Activated CD4-positive, alpha-beta memory T cell treated with anti-CD3 and anti-CD28 coated beads for 36 hours (primary cell): ENCODE measurements at regions of chr7 and their contacts with region 1.

Region 1: GRCh38 chr7:130277763-130278643 is 11.3 kb downstream of the CPA2 start:
- DNase-seq: no peak
- H3K4me3 Mint-ChIP-seq: no peak overlapping the region
- H3K27ac Mint-ChIP-seq: peak overlapping the region; percentile 83
- H3K4me1 Mint-ChIP-seq: peaks cover 31% of the 10 kb centered on the region
- H3K27me3 Mint-ChIP-seq: peaks cover 11% of the 10 kb centered on the region

Region 2: DNA sequence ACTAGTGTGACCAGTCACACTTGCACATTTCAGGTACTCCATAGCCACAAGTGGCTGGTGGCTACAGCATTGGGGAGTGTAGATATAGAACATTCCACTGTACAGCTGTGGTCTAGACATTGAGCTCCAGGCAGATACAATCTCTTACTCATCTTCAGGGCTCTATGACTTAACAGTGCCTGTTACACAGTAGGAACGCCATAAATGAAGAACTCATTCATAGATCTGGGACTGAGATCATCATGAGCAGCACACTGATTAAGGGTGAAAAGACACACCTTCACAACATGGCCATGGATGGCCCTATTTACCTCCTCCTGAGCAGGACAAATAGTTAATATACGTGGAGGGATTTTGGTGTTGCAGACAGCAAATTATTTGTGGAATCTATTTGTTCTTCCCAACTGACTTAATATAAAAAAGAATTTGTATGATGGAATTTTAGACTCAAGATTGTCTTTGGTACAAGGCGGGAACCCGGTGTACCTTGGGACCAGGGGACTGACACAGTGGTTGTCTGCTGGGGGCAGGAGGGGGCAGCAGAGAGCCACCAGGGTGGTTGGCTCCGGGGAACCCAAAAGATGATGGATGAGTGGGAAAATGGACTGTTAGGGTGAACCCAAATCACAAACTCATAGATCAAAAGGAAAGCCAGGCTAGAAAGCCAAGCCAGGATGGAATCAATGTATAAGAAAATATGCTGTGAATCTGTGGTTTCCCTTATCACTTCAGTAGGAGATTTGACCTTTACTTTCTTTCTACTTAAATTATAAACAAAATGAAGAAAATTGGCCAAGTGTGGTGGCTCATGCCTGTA is 35.6 kb before region 1 on chr7:
- CTCF ChIA-PET with region 1: interaction called, 4 read pairs
- POLR2A ChIA-PET with region 1: no interaction called
- intact Hi-C with region 1: loop called (anchors 2 kb)
- DNase-seq: peak; percentile 73
- H3K4me3 Mint-ChIP-seq: no peak overlapping the region
- H3K27ac Mint-ChIP-seq: no peak overlapping the region
- H3K4me1 Mint-ChIP-seq: peaks cover 12% of the 10 kb centered on the region
- H3K27me3 Mint-ChIP-seq: peaks cover 4% of the 10 kb centered on the region

Region 3: GRCh38 chr7:130363026-130363798 is 85.2 kb after region 1 on chr7:
- CTCF ChIA-PET with region 1: interaction called, 3 read pairs
- POLR2A ChIA-PET with region 1: no interaction called
- intact Hi-C with region 1: loop called (anchors 1 kb)
- DNase-seq: peak; percentile 87
- H3K4me3 Mint-ChIP-seq: no peak overlapping the region
- H3K27ac Mint-ChIP-seq: no peak overlapping the region
- H3K4me1 Mint-ChIP-seq: peaks cover 22% of the 10 kb centered on the region
- H3K27me3 Mint-ChIP-seq: peaks cover 2% of the 10 kb centered on the region

Region 4: GRCh38 chr7:130649004-130649790 is 371.2 kb after region 1 on chr7:
- CTCF ChIA-PET with region 1: no interaction called
- POLR2A ChIA-PET with region 1: no interaction called
- intact Hi-C with region 1: loop called (anchors 1 kb)
- DNase-seq: peak; percentile 42
- H3K4me3 Mint-ChIP-seq: peak overlapping the region; percentile 30
- H3K27ac Mint-ChIP-seq: peak overlapping the region; percentile 86
- H3K4me1 Mint-ChIP-seq: peaks cover 40% of the 10 kb centered on the region
- H3K27me3 Mint-ChIP-seq: no peaks in the 10 kb centered on the region

Region 5: GRCh38 chr7:131231381-131232220 is 953.6 kb after region 1 on chr7:
- CTCF ChIA-PET with region 1: no interaction called
- POLR2A ChIA-PET with region 1: no interaction called
- intact Hi-C with region 1: loop called (anchors 10 kb)
- DNase-seq: peak; percentile 81
- H3K4me3 Mint-ChIP-seq: peak overlapping the region; percentile 64
- H3K27ac Mint-ChIP-seq: peak overlapping the region; percentile 88
- H3K4me1 Mint-ChIP-seq: peaks cover 48% of the 10 kb centered on the region
- H3K27me3 Mint-ChIP-seq: no peaks in the 10 kb centered on the region